Mammary epithelial cell (primary cell): ENCODE measurements at regions of chr9 and their contacts with region 1.

Region 1: DNA sequence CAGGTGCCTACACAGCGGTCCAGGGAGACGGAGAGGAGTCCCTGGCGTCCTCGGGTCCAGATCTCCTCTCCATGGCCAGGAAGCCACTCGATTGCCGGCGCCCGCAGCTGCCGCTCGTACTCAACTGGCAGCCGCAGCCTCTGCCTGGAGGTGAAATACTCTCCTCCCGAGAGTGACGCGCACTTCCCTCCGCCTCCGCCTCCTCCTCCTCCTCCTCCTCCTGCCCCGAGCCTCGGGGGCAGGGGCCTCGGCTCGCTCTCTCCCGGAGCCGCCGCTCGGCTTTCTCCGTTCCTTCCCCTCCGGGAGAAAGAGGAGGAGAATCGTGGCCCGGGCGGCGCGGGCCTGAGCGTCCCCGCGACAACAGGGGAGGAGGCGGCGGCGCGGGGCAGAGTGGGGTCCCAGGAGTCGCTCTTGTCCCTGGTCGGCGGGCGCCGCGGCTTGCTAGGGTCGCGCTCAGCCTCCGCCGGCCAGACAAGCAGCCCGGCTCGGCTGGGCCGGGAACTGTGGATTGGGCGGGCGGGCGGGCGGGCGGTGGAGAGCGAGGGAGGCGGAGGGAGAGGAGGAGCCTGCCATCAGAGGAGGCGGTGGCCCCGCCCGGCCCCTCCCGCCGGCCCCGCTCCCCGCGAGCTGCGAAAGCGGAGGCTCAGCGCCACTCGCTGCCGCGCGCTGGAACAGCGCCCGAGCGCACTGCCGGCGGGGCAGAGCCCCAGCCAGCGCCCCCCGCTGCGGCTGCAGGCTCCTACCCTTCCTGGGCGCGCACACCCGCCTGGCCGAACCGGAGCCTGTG is at the start of gene CEMIP2:
- DNase-seq: peak; percentile 94
- H3K4me3 ChIP-seq: peak within 1 kb of the TSS; percentile 76 to 86 (median 84)
- H3K27ac ChIP-seq: peak within 1 kb of the TSS; percentile 69
- H3K4me1 ChIP-seq: peaks cover 37% of the 10 kb centered on the region
- H3K27me3 ChIP-seq: no peaks in the 10 kb centered on the region
- CTCF ChIP-seq: peak; percentile 18 to 54
- total RNA-seq, gene CEMIP2: 76.4 to 398 TPM

Region 2: DNA sequence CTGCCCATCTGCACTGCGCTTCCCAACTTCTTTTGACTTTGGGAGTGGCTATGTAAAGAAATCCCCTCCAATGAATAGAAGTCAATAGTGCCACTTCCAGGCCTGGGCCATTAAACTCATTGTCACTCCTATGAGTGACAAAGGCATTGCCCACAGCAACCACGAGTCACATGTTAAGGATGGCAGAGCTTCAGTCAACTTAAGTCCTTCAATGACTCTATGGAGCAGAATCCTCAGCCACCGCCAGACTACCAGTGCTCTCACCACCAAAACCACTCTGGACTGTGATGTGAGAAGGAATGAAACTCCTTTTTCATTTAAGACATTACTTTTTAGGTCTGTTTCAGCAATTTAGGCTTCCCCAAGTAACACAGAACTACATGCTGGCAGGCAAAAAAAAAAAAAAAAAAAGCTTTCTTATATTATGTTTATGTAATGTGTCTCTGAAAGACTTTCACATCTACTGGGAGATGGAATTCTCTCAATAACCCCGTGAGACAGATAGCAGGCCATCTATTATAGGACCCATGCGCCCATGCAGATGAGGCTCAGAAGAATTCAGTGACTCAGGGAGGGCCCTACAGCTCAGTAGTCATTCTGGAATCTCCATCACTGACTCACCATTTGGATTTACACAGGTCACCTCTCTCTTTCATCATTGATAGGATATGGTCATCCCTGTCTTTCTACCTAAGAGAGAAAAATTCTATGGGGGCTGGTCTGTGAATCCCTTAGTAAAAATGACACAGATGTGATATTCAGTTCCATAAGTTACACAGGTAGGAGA is 180.8 kb before region 1 on chr9:
- CTCF ChIA-PET with region 1: no interaction called
- dilution Hi-C with region 1: no loop called
- in situ Hi-C with region 1: no loop called
- intact Hi-C with region 1: loop called (anchors 5 kb)
- DNase-seq: peak; percentile 88
- H3K4me3 ChIP-seq: no peak overlapping the region
- H3K27ac ChIP-seq: peak overlapping the region; percentile 23
- H3K4me1 ChIP-seq: peaks cover 4% of the 10 kb centered on the region
- H3K27me3 ChIP-seq: no peaks in the 10 kb centered on the region
- CTCF ChIP-seq: no peak

Region 3: DNA sequence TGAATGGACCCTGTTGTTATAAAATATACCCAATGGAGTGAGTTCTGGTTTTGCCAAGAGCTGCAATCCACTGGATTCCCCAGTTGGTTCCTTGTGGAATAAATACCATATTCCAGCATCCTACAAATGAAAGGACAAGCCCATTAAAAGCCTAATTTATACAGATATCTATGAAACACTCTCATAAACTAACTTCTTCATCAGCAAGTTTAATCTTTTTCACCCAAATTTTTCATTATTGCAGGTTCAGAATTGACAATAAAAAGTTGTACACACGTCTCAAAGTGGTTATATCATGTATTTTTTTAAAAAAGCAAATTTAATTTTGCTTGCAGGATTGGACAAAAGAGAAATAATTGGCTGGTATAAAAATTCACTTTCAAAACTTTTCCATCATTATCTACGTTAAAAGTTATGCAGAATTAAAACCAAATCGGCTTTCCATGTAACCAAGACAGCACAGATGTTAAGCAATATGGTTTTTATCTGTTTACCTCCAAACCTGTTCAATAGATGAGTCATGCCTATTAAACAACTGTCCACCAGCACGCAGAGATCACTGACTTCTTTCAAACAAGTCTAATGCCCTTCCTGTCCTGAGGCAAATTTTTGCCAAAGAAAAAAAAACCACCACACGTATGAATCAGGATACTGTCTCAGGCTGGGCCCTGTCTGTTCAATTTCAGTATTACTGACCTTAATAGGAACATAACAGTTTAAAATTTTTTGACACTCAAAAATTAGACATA is 42.8 kb before region 1 on chr9:
- CTCF ChIA-PET with region 1: no interaction called
- dilution Hi-C with region 1: no loop called
- in situ Hi-C with region 1: no loop called
- intact Hi-C with region 1: loop called (anchors 1 kb)
- DNase-seq: peak; percentile 96
- H3K4me3 ChIP-seq: no peak overlapping the region
- H3K27ac ChIP-seq: peak overlapping the region; percentile 69
- H3K4me1 ChIP-seq: peaks cover 19% of the 10 kb centered on the region
- H3K27me3 ChIP-seq: no peaks in the 10 kb centered on the region
- CTCF ChIP-seq: no peak